ENCODE measurements at regions of chr14 and their contacts with region 1.

Region 1: DNA sequence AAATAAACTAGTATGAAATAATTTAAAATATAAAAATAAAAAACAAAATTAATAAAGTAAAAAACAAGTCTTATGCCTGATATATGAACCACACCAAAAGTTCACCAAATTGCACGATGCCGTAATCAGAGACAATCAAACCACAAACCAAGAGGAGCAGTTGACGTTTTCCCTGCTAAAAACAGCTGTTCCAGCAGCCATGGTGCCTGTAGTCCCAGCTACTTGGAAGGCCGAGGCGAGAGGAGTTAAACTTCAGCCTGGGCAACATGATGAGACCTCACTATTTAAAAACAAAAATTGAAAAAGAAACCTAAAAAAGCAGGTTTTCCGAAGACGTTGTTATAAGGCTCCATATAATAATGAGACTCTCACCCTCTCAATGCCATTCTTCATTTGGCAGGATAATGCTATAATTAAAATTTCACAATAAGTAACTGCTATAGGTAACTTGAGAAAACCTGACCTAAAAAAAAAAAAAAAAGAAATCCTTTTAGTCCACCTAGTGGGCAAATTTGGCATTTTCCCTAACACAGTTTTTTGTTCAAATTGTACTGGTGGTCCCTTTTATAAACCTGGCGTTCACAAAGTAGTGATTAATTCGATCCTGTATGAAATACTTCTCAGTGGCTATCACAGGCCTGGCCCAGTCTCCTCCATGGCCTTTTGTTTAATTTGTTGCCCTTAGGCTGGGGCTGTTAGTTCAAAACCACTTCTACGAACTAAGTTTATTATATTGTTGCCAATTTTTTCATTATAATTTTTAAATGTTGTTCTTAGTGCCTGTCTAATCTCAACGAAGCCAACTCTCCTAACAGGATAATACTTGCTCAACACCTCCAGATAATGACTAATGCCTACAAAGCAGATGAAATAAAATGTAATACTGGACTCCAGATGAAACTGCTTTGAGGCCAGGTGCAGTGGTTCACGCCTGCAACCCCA is 62.1 kb downstream of the TNFAIP2 start:
- DNase-seq: no peak
- H3K4me3 ChIP-seq: no peak overlapping the region
- H3K27ac ChIP-seq: no peak overlapping the region
- H3K4me1 ChIP-seq: peaks cover 8 to 14% (median 11%) of the 10 kb centered on the region in 4 experiments; a peak in 5 of 7 replicates
- H3K27me3 ChIP-seq: peaks cover 1 to 21% (median 19%) of the 10 kb centered on the region in 4 experiments
- CTCF ChIP-seq: peak in 2 of 3 experiments; percentile 27 to 53; a peak in 2 of 4 replicates
- EP300 ChIP-seq: no peak
- POLR2A ChIP-seq: no peak
- RAD21 ChIP-seq: peak in 1 of 2 experiments; percentile 22; a peak in 1 of 4 replicates

Region 2: GRCh38 chr14:102966681-102967505 is 218.4 kb before region 1 on chr14:
- CTCF ChIA-PET with region 1: no interaction called
- POLR2A ChIA-PET with region 1: no interaction called
- DNase-seq: no peak
- H3K4me3 ChIP-seq: no peak overlapping the region
- H3K27ac ChIP-seq: no peak overlapping the region
- H3K4me1 ChIP-seq: no peaks in the 10 kb centered on the region
- H3K27me3 ChIP-seq: no peaks in the 10 kb centered on the region
- CTCF ChIP-seq: no peak
- EP300 ChIP-seq: no peak
- POLR2A ChIP-seq: no peak
- RAD21 ChIP-seq: no peak

Region 3: GRCh38 chr14:103160866-103161391 is 24.4 kb before region 1 on chr14:
- CTCF ChIA-PET with region 1: interaction called, 14 read pairs
- POLR2A ChIA-PET with region 1: no interaction called
- DNase-seq: no peak
- H3K4me3 ChIP-seq: no peak overlapping the region
- H3K27ac ChIP-seq: no peak overlapping the region
- H3K4me1 ChIP-seq: peaks cover 0 to 5% (median 4%) of the 10 kb centered on the region in 4 experiments; a peak in 3 of 7 replicates
- H3K27me3 ChIP-seq: no peaks in the 10 kb centered on the region
- CTCF ChIP-seq: no peak
- EP300 ChIP-seq: no peak
- POLR2A ChIP-seq: no peak
- RAD21 ChIP-seq: no peak

Region 4: DNA sequence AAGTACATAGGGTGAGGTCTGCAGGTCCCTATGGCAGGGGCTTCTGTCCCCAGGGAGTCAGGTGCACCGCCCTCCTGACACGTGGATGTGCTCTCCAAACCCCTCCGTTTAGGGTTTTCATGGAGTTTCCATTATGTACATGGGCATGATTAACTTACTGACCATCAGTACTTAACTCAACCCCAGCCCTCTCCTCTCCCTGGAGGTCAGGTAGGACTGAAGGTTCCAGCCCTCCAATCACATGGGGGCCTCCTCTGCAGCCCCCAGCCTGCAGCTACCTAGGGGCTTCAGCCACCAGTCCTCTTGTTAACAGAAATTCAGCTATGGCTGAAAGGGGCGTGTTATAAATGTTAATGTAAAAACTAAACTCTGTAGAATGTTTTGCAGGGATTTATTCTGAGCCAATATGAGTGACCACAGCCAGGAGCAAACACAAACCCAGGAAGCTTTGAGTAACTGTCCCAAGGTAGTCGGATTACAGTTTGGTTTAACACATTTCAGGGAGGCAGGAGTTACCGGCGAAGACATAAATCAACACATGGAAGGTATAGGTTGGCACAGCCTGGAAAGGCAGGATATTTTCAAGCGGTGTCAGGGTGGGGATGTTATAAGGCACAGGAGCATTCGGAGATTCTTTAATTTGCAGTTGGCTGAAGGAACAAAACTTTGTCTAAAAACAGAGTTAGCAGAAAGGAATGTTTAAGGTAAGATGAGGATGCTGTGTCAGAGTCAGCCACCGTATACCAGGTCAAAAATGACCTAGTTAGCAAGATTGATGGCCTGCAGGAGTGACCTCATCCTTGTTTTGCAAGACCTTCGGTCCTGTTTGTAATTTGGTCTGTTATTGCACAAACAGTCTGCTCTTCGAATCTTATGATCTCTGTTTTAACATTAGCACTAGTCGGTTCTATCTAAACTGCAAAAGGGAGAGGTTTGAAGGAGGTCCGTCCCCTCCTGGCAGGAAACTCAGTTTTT is 13.1 kb after region 1 on chr14:
- CTCF ChIA-PET with region 1: interaction called, 14 read pairs
- POLR2A ChIA-PET with region 1: interaction called, 4 read pairs
- DNase-seq: no peak
- H3K4me3 ChIP-seq: no peak overlapping the region
- H3K27ac ChIP-seq: no peak overlapping the region
- H3K4me1 ChIP-seq: peaks cover 0 to 3% (median 0%) of the 10 kb centered on the region in 4 experiments; a peak in 1 of 7 replicates
- H3K27me3 ChIP-seq: no peaks in the 10 kb centered on the region
- CTCF ChIP-seq: no peak
- EP300 ChIP-seq: no peak
- POLR2A ChIP-seq: no peak
- RAD21 ChIP-seq: no peak

Region 5: DNA sequence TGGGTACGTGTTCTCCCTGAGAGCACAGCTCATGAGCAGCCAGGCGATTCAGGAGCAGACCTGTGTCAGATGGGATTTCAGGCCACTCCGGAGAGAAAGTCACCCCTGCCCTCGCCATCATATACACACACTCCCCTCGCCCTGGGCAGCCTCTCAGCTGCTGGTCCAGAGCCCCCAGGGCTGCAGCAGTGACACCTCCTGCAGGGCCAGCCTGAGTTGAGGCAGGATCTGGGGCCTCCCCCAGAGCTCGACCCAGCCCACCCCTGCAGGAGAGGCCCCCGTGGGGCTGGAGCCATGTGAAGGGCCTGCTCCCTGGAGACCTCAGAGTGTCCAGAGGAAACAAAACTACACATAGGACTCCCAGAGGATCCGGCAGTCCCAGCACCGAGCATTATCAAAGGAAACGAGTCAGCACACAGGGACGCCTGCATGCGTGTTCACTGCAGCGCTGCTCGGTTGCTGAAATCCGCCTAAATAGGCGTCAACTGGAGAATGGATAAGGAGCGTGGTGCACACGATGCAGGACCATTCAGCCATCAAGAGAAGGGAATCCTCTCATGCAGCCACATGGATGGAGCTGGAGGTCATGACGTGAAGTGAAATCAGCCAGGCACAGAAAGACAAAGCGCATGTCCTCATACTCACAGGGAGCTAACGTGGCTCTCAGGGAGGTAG is 41.9 kb after region 1 on chr14:
- CTCF ChIA-PET with region 1: no interaction called
- POLR2A ChIA-PET with region 1: no interaction called
- DNase-seq: no peak
- H3K4me3 ChIP-seq: no peak overlapping the region
- H3K27ac ChIP-seq: no peak overlapping the region; the same call in 1 of the 2 replicates
- H3K4me1 ChIP-seq: peaks cover 0 to 6% (median 1%) of the 10 kb centered on the region in 4 experiments; a peak in 3 of 7 replicates
- H3K27me3 ChIP-seq: no peaks in the 10 kb centered on the region; a peak in 1 of 7 replicates
- CTCF ChIP-seq: no peak
- EP300 ChIP-seq: no peak
- POLR2A ChIP-seq: no peak
- RAD21 ChIP-seq: no peak